Posterior vena cava (tissue), 2 donors: ENCODE measurements at regions of chr7 and their contacts with region 1.

Region 1: GRCh38 chr7:67637027-67637358 is 640.4 kb downstream of the TYW1 start:
- DNase-seq: no peak

Region 2: GRCh38 chr7:67496589-67496988 is 140.4 kb before region 1 on chr7:
- intact Hi-C with region 1: no loop called
- DNase-seq: no peak

Region 3: DNA sequence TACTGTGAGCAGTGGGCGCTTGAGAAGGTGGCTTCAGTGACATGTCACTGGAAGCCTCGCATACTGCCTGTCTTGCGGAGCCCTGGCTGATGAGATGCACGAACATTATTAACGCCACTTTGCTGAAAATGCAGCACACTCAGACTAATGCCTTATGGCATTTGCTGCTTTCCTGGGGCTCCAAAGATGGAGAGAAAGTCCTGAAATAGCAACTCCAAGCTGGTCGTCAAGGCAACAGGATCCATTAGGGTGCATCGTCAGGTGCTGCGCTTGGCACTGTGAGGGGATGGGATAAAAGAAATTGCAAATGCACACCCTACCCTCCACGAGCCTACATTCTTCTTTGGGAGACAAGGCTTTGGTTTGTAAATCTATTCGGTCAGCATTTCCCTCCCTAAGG is 47.8 kb before region 1 on chr7:
- intact Hi-C with region 1: loop called in 1 of 2 experiments (anchors 2 kb)
- DNase-seq: no peak

Region 4: GRCh38 chr7:67595431-67596180 is 41.4 kb before region 1 on chr7:
- intact Hi-C with region 1: loop called in 1 of 2 experiments (anchors 2 kb)
- DNase-seq: no peak